ENCODE measurements at regions of chr3 and their contacts with region 1.

Region 1: GRCh38 chr3:44477312-44478030 is at the start of gene ZNF445:
- DNase-seq: peak; percentile 78
- H3K4me3 ChIP-seq: peak within 1 kb of the TSS; percentile 61 to 98 (median 98)
- H3K27ac ChIP-seq: peak within 1 kb of the TSS; percentile 35
- H3K4me1 ChIP-seq: peaks cover 11% of the 10 kb centered on the region
- H3K27me3 ChIP-seq: no peaks in the 10 kb centered on the region
- CTCF ChIP-seq: no peak
- POLR2A ChIP-seq: peak; percentile 79
- total RNA-seq, gene ZNF445: 15.0 and 17.8 TPM in 2 replicates

Region 2: GRCh38 chr3:44284949-44285348 is 192.5 kb before region 1 on chr3:
- CTCF ChIA-PET with region 1: no interaction called
- POLR2A ChIA-PET with region 1: no interaction called
- dilution Hi-C with region 1: no loop called
- intact Hi-C with region 1: no loop called
- DNase-seq: no peak
- H3K4me3 ChIP-seq: no peak overlapping the region
- H3K27ac ChIP-seq: no peak overlapping the region
- H3K4me1 ChIP-seq: no peaks in the 10 kb centered on the region
- H3K27me3 ChIP-seq: no peaks in the 10 kb centered on the region
- CTCF ChIP-seq: no peak
- POLR2A ChIP-seq: no peak

Region 3: DNA sequence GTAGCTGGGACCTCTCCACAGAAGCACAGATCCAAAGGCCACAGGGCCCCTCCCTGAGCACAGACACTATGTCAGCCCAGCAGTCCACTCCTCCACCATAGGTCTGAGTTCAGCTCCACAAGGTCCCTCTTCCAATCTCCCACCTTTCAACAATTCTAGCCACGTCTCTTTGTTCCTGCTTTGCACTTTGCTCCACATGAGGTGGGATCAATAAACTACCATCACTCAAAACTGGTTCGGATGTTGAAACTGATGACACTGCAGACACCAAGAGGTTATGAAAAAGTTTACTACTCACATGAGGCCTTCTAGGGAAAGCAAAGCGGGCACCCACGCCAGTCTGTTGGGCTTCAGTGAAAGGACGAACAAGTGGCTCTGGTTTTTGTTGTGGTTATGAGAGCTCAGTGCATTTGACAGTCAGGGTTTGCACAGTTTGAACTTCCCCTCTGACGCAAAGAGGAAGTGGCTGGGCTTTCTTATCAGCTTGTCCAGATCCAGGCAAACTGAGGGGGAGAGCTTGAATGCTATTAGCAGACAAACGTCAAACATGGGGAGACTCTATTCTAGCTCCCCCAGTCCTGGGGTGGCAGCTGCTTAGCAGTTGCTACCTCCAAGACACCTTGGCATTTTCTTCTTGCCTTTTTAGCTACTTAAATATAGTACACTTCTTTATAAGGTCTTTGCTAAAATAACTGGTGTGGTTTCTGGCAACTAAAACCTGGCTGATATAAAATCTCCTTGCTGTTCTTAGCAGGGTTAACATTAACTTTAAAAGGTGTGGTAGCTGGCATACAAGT is 37.8 kb before region 1 on chr3:
- CTCF ChIA-PET with region 1: interaction called, 3 read pairs
- POLR2A ChIA-PET with region 1: interaction called, 3 read pairs
- dilution Hi-C with region 1: no loop called
- intact Hi-C with region 1: loop called (anchors 1 kb)
- DNase-seq: peak; percentile 97
- H3K4me3 ChIP-seq: no peak overlapping the region
- H3K27ac ChIP-seq: peak overlapping the region; percentile 96
- H3K4me1 ChIP-seq: peaks cover 16% of the 10 kb centered on the region
- H3K27me3 ChIP-seq: no peaks in the 10 kb centered on the region
- CTCF ChIP-seq: no peak
- POLR2A ChIP-seq: peak; percentile 33

Region 4: DNA sequence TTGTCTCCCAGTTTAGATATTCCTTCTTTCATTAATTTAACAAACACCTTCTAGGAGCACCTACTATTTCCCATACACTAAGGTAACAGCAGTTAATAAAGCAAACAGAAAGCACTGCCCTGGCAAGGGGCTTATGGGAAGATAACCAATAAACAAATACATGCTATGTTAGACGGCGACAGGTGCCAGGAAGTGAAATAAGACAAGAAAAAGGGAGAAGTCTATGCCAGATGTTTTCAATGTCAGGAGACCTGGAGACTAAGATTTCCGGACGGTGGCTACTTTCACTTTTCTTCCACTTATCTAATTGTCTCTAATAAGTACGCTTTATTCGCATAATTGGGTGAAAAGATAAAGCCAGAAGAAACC is 32.5 kb after region 1 on chr3:
- CTCF ChIA-PET with region 1: no interaction called
- POLR2A ChIA-PET with region 1: no interaction called
- dilution Hi-C with region 1: no loop called
- intact Hi-C with region 1: loop called (anchors 1 kb)
- DNase-seq: peak; percentile 49
- H3K4me3 ChIP-seq: peak overlapping the region; percentile 80 to 98 (median 88)
- H3K27ac ChIP-seq: peak overlapping the region; percentile 58
- H3K4me1 ChIP-seq: peaks cover 13% of the 10 kb centered on the region
- H3K27me3 ChIP-seq: no peaks in the 10 kb centered on the region
- CTCF ChIP-seq: no peak
- POLR2A ChIP-seq: no peak

Region 5: GRCh38 chr3:44584646-44585501 is 107.4 kb after region 1 on chr3 and contains the start of gene ZNF660:
- CTCF ChIA-PET with region 1: no interaction called
- POLR2A ChIA-PET with region 1: no interaction called
- dilution Hi-C with region 1: no loop called
- intact Hi-C with region 1: no loop called
- DNase-seq: peak; percentile 55
- H3K4me3 ChIP-seq: peak within 1 kb of the TSS; percentile 50 to 61 (median 51)
- H3K27ac ChIP-seq: no peak within 1 kb of the TSS
- H3K4me1 ChIP-seq: peaks cover 2% of the 10 kb centered on the region
- H3K27me3 ChIP-seq: peaks cover 15 to 16% of the 10 kb centered on the region in 2 experiments
- CTCF ChIP-seq: no peak
- POLR2A ChIP-seq: no peak
- total RNA-seq, gene ZNF660: 1.0 and 1.5 TPM in 2 replicates

Region 6: GRCh38 chr3:44669760-44670159 is 192.3 kb after region 1 on chr3:
- CTCF ChIA-PET with region 1: no interaction called
- POLR2A ChIA-PET with region 1: no interaction called
- dilution Hi-C with region 1: no loop called
- intact Hi-C with region 1: no loop called
- DNase-seq: no peak
- H3K4me3 ChIP-seq: no peak overlapping the region
- H3K27ac ChIP-seq: no peak overlapping the region
- H3K4me1 ChIP-seq: no peaks in the 10 kb centered on the region
- H3K27me3 ChIP-seq: no peaks in the 10 kb centered on the region
- CTCF ChIP-seq: no peak
- POLR2A ChIP-seq: no peak

Measured in endothelial cell of umbilical vein (primary cell).